CD8-positive, alpha-beta memory T cell (primary cell): ENCODE measurements at regions of chr10 and their contacts with region 1.

Region 1: GRCh38 chr10:30404540-30404939 is 29.4 kb upstream of the MAP3K8 start:
- DNase-seq: no peak
- H3K4me3 ChIP-seq: no peak overlapping the region
- H3K4me3 Mint-ChIP-seq: no peak overlapping the region
- H3K27ac ChIP-seq: no peak overlapping the region
- H3K27ac Mint-ChIP-seq: no peak overlapping the region
- H3K4me1 ChIP-seq: no peaks in the 10 kb centered on the region
- H3K4me1 Mint-ChIP-seq: no peaks in the 10 kb centered on the region
- H3K27me3 ChIP-seq: no peaks in the 10 kb centered on the region
- H3K27me3 Mint-ChIP-seq: peaks cover 0 to 3% of the 10 kb centered on the region in 2 donors

Region 2: GRCh38 chr10:30392564-30392990 is 12.0 kb before region 1 on chr10:
- CTCF ChIA-PET with region 1: interaction called, 14 read pairs
- POLR2A ChIA-PET with region 1: no interaction called
- DNase-seq: peak; percentile 56 to 79 (median 63)
- H3K4me3 ChIP-seq: no peak overlapping the region
- H3K4me3 Mint-ChIP-seq: peak overlapping the region in 1 of 7 donors; percentile 6
- H3K27ac ChIP-seq: no peak overlapping the region
- H3K27ac Mint-ChIP-seq: peak overlapping the region in 1 of 8 donors; percentile 40
- H3K4me1 ChIP-seq: peaks cover 4% of the 10 kb centered on the region
- H3K4me1 Mint-ChIP-seq: peaks cover 3 to 10% (median 4%) of the 10 kb centered on the region in 3 donors
- H3K27me3 ChIP-seq: no peaks in the 10 kb centered on the region
- H3K27me3 Mint-ChIP-seq: peaks cover 11 to 15% of the 10 kb centered on the region in 2 donors

Region 3: GRCh38 chr10:30447125-30447799 is 42.7 kb after region 1 on chr10:
- CTCF ChIA-PET with region 1: no interaction called
- POLR2A ChIA-PET with region 1: no interaction called
- DNase-seq: no peak
- H3K4me3 ChIP-seq: no peak overlapping the region
- H3K4me3 Mint-ChIP-seq: peak overlapping the region in 1 of 7 donors; percentile 27
- H3K27ac ChIP-seq: no peak overlapping the region
- H3K27ac Mint-ChIP-seq: peak overlapping the region in 1 of 8 donors; percentile 39
- H3K4me1 ChIP-seq: no peaks in the 10 kb centered on the region
- H3K4me1 Mint-ChIP-seq: peaks cover 26 to 61% (median 49%) of the 10 kb centered on the region in 3 donors
- H3K27me3 ChIP-seq: no peaks in the 10 kb centered on the region
- H3K27me3 Mint-ChIP-seq: no peaks in the 10 kb centered on the region